Activated CD8-positive, alpha-beta T cell treated with anti-CD3 and anti-CD28 coated beads for 36 hours (primary cell): ENCODE measurements at regions of chr11 and their contacts with region 1.

Region 1: DNA sequence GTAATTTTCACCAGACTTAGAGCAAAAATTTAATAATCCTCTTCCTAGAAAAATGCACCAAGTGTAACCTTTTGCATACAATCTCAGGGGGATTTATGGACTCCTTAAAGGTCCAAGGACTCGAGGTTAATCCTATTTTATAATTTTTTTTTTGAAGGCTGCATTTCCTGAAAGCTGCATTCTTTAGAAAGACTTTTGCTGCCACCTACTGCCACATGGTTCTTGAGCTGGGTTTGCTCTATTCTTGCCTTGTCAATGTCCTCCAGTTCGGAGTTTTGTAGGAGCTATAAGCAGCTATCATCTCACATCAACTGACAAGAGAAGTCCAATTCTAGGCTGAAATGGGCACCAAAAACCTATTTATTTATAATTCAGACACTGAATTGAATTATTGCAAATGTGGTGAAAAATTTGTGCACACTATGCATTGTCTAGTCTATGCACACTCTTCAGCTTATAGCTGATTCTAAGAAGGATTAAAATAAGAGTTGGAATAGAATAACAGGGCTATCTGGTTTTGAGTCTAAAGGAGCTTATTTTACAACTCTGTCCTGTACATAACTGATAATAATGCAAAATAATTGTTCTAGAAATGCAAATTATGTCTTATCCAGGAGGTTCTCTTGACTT is 31.3 kb downstream of the TRAF6 start:
- DNase-seq: peak; percentile 60
- ATAC-seq: peak; percentile 37
- H3K4me3 Mint-ChIP-seq: no peak overlapping the region
- H3K27ac Mint-ChIP-seq: no peak overlapping the region
- H3K4me1 Mint-ChIP-seq: peaks cover 4% of the 10 kb centered on the region
- H3K27me3 Mint-ChIP-seq: no peaks in the 10 kb centered on the region
- CTCF ChIP-seq: peak; percentile 51

Region 2: DNA sequence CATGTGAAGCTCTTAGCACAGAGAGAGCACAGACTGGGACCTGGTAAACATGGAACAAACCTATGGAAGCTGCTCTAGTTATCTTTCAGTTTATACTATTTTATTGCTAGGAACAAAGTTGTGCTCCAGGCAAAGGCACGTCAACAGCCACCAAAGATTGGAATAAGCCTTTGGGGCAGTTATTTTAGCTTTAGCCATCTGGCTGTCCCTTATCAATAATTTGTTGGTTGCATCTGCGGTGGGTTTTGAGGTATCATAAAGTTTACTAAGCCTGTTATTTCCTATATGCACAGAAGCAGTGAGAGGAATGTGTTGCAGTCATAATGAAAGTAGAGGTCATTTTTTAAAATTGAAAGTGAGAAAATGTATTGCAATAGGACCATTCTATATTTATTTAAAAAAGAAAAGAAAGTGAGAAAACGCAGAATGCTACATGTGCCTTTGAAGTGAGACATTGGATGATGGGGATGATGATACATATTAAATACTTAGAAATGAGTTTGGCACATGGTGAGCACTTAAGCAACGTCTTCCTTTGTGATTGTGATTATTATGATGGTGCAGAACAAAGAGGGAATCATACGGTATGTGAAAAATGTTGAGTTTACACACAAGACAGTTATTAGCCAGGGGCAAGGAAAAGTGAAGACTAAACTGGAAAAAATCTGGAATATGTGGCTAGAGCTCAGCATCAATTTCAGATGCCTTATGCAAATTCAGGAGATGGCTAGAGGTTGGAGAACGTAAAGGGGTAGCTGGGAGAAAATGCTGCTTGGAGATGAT is 124.4 kb before region 1 on chr11:
- CTCF ChIA-PET with region 1: interaction called, 19 read pairs
- POLR2A ChIA-PET with region 1: no interaction called
- intact Hi-C with region 1: loop called (anchors 5 kb)
- DNase-seq: no peak
- ATAC-seq: peak; percentile 67
- H3K4me3 Mint-ChIP-seq: no peak overlapping the region
- H3K27ac Mint-ChIP-seq: no peak overlapping the region
- H3K4me1 Mint-ChIP-seq: peaks cover 52% of the 10 kb centered on the region
- H3K27me3 Mint-ChIP-seq: peaks cover 30% of the 10 kb centered on the region
- CTCF ChIP-seq: no peak

Region 3: DNA sequence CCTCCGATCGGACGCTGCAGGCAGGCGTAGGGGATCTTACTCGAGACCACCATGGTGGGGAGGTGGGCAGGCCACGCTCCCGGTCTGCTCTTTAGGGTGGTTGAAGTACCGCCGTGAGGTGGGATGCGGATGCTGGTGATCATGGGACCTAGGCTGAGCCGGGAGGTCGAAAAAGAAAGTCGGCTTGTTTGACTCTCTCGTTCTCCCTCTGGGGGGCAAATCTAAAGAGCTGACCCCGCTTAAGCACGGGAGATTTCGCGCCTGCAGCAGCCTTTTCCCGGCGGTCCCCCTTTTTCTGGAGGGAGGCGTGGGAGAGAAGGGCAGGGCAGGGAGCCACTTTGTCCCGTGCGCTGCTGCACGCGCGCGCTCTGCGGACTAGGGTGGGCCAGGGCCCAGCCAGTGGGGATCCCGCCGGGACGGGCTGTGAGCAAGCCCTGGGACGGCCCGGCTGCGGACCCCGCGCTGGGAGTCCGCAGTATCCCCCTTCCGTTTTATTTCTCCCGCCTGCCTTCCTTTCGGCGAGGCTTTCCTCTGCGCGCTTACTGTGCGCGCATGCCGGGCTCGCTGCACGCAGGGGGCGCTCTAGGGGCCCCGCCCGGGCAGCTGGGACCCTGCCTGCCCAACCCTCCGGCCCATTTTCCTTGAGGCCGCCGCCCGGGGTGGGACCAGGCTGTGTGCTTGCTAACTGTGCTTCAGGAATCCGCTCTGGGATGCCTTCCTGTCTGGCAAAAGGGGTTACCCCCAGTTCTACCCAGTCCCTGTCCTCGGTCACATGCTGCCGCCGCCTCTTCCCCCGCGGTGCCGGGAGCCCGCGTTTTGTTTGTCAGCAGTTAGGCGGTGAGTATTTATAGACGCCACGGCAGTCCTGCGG is 101.7 kb before region 1 on chr11:
- CTCF ChIA-PET with region 1: interaction called, 12 read pairs
- POLR2A ChIA-PET with region 1: no interaction called
- intact Hi-C with region 1: no loop called
- DNase-seq: peak; percentile 70
- ATAC-seq: peak; percentile 65
- H3K4me3 Mint-ChIP-seq: peak overlapping the region; percentile 88
- H3K27ac Mint-ChIP-seq: peak overlapping the region; percentile 79
- H3K4me1 Mint-ChIP-seq: peaks cover 26% of the 10 kb centered on the region
- H3K27me3 Mint-ChIP-seq: peaks cover 58% of the 10 kb centered on the region
- CTCF ChIP-seq: peak; percentile 67

Region 4: DNA sequence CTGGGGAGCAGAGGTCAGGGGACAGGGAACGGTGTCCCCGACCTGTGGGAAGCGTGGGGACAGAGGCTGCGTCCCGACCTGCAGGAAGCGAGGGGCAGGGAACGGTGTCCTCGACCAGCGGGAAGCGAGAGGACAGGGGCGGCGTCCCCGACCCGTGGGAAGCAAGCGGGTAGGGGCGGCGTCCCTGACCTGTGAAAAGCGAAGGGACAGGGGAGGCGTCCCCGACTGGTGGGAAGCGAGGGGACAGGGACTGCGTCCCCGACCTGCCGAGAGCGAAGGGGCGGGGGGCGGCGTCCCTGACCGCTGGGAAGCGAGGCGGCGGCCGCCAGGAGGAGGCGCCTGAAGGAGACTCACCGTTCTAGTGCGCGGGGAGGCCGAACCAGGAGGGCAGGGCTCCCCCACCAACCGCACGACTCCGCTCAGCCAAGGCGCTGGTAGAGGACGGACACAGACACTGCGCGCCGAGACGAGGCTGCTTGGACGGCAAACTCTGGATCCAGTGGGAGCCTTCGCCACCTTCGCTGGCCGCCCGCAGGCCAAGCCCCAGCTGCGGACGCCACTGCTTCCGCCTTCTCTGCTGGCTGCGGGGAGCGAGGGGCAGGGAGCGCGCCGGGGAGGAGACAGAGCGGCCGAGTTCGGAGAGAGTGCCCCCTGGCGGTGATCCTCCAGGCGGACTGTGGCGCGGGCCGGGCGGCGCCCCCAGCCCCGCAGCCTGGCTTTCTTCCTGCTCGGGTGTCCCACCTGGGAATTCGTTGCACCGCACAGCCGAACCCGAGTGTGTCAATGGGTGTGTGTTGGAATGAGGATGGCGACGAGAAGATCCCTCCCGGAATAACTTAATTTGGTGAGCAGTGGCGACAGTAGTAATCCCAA is 31.1 kb after region 1 on chr11 and contains the start of gene TRAF6:
- CTCF ChIA-PET with region 1: interaction called, 13 read pairs
- POLR2A ChIA-PET with region 1: no interaction called
- intact Hi-C with region 1: no loop called
- DNase-seq: peak; percentile 90
- ATAC-seq: peak; percentile 95
- H3K4me3 Mint-ChIP-seq: peak within 1 kb of the TSS; percentile 95
- H3K27ac Mint-ChIP-seq: peak within 1 kb of the TSS; percentile 85
- H3K4me1 Mint-ChIP-seq: peaks cover 28% of the 10 kb centered on the region
- H3K27me3 Mint-ChIP-seq: peaks cover 2% of the 10 kb centered on the region
- CTCF ChIP-seq: peak; percentile 92
- total RNA-seq, gene TRAF6: 8.8 to 10.3 TPM